G401 (cell line): ENCODE measurements at regions of chr9 and their contacts with region 1.

Region 1: GRCh38 chr9:95666096-95666784 is 149.5 kb upstream of the PTCH1 start:
- DNase-seq: peak; percentile 2

Region 2: GRCh38 chr9:95605816-95606488 is 60.3 kb before region 1 on chr9:
- in situ Hi-C with region 1: loop called (anchors 5 kb)
- DNase-seq: no peak

Region 3: DNA sequence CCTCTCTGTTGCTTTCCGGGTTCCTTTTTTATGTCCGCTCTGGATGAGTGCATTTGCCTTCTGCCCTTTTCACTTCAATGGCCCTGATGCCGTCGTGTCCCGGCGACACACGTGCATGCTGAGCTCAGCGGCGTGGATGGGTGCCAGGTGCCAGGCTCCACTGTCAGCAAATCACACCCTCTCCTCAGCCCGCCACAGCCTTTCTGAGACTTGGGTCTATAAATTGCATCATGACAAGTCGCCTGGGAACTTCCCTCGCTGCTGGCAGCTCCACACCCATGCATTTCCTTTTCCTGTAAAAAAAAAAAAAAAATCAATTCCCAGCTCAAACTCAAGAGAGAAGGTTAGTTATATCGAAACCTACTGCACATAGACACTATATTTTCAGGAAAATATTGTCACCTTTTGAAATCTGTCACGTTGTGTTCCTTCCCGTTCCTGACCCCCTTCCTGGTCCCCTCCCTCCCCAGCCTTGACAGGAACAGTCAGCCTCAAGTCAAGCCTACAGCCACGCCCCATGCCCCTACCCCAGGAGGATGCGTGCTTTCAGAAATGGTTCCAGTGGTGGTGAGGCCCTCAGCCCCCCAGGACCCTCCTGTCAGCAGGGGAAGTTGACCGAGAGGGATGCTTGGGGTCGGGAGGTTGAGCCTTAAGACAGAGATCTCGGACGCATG is 39.2 kb before region 1 on chr9:
- in situ Hi-C with region 1: no loop called
- DNase-seq: no peak

Region 4: GRCh38 chr9:95710446-95710845 is 44.2 kb after region 1 on chr9:
- in situ Hi-C with region 1: loop called (anchors 5 kb)
- DNase-seq: no peak